Prostate gland (tissue), 2 donors: ENCODE measurements at regions of chr7 and their contacts with region 1.

Region 1: GRCh38 chr7:27739909-27740448 is at the start of gene TAX1BP1:
- DNase-seq: peak; percentile 96
- H3K4me3 ChIP-seq: peak within 1 kb of the TSS; percentile 98 to 99
- H3K27ac ChIP-seq: peak within 1 kb of the TSS; percentile 99 to 100
- H3K4me1 ChIP-seq: no peaks in the 10 kb centered on the region
- H3K27me3 ChIP-seq: no peaks in the 10 kb centered on the region
- CTCF ChIP-seq: peak in 1 of 4 experiments; percentile 15
- POLR2A ChIP-seq: peak; percentile 100
- total RNA-seq, gene TAX1BP1: 105 to 125 TPM

Region 2: DNA sequence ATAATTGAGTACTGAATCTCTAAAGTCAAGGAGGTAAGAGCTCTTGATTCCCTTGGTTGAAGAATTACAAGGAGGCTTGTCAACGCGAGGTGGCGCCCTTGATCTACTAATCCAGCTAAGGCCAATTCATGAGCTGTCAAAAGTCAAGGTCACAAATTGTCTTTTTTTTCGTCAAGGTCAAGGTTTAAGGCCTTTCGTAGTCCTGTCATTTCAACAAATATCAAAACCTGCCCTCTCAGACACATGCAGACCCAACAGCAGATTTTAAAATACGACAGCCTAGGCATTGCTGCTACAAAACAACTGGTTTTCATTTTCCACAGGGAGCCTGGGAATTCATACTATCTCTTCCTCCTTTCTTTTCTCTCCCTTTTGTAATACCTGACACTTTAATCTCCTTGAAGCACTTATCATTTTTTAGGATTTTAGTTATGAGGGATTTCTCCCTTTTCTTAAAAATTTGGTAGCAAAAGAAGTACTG is 543.7 kb before region 1 on chr7:
- intact Hi-C with region 1: loop called (anchors 5 kb)
- DNase-seq: peak; percentile 95
- H3K4me3 ChIP-seq: peak overlapping the region; percentile 76 to 81
- H3K27ac ChIP-seq: peak overlapping the region; percentile 96 to 97
- H3K4me1 ChIP-seq: no peaks in the 10 kb centered on the region
- H3K27me3 ChIP-seq: no peaks in the 10 kb centered on the region
- CTCF ChIP-seq: peak; percentile 80 to 87 (median 84)
- POLR2A ChIP-seq: no peak

Region 3: DNA sequence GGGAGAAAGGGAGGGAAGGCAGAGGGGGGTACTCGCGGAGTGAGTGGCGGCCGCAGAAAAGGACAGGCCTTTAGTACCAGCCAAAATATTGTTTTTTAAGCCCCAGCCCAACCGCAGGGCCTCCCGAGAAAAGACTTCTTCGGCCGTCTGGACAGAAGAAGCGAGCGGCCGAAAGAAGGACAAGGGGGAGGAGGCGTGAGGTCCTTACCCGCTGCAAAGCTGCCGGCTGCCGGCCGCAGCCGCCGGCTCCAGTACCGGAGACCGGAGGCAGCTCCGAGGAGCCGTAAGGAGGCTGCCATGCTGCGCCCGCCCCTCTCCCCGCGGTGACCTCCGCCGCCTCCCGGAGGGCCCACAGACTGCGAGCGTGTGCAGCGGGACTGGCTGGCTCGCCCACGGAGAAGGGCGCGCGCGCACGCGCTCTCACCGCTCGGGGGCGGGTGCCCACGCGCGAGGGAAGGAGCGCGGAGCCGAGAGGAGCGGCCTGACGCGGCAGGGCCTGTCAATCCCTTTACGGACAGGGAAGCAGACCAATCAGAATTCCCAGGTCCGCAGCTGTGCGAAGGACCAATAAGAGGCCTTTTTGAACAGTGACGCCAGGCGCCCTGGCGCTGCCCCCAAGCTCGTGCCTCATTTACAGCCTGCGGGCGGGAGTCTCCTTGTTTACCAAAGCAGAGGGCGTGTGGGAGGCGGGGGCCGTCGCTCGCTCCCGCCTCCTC is 77.3 kb before region 1 on chr7 and contains the start of gene HIBADH:
- intact Hi-C with region 1: loop called (anchors 2 kb)
- DNase-seq: peak; percentile 99
- H3K4me3 ChIP-seq: peak within 1 kb of the TSS; percentile 83 to 94
- H3K27ac ChIP-seq: peak within 1 kb of the TSS; percentile 95 to 97
- H3K4me1 ChIP-seq: no peaks in the 10 kb centered on the region
- H3K27me3 ChIP-seq: no peaks in the 10 kb centered on the region
- CTCF ChIP-seq: peak in 3 of 4 experiments; percentile 20 to 61 (median 58)
- POLR2A ChIP-seq: peak; percentile 99
- total RNA-seq, gene HIBADH: 78.2 to 80.5 TPM

Region 4: GRCh38 chr7:27825891-27826290 is 85.9 kb after region 1 on chr7:
- intact Hi-C with region 1: no loop called
- DNase-seq: no peak
- H3K4me3 ChIP-seq: no peak overlapping the region
- H3K27ac ChIP-seq: no peak overlapping the region
- H3K4me1 ChIP-seq: no peaks in the 10 kb centered on the region
- H3K27me3 ChIP-seq: no peaks in the 10 kb centered on the region
- CTCF ChIP-seq: no peak
- POLR2A ChIP-seq: no peak

Region 5: GRCh38 chr7:27952456-27953285 is 212.7 kb after region 1 on chr7:
- intact Hi-C with region 1: no loop called
- DNase-seq: no peak
- H3K4me3 ChIP-seq: no peak overlapping the region
- H3K27ac ChIP-seq: no peak overlapping the region
- H3K4me1 ChIP-seq: no peaks in the 10 kb centered on the region
- H3K27me3 ChIP-seq: no peaks in the 10 kb centered on the region
- CTCF ChIP-seq: no peak
- POLR2A ChIP-seq: no peak

Region 6: GRCh38 chr7:28020302-28020940 is 280.4 kb after region 1 on chr7:
- intact Hi-C with region 1: loop called (anchors 10 kb)
- DNase-seq: peak; percentile 76
- H3K4me3 ChIP-seq: no peak overlapping the region
- H3K27ac ChIP-seq: no peak overlapping the region
- H3K4me1 ChIP-seq: no peaks in the 10 kb centered on the region
- H3K27me3 ChIP-seq: no peaks in the 10 kb centered on the region
- CTCF ChIP-seq: peak; percentile 59 to 91 (median 90)
- POLR2A ChIP-seq: no peak